SK-N-SH (cell line): ENCODE measurements at regions of chr12 and their contacts with region 1.

Region 1: DNA sequence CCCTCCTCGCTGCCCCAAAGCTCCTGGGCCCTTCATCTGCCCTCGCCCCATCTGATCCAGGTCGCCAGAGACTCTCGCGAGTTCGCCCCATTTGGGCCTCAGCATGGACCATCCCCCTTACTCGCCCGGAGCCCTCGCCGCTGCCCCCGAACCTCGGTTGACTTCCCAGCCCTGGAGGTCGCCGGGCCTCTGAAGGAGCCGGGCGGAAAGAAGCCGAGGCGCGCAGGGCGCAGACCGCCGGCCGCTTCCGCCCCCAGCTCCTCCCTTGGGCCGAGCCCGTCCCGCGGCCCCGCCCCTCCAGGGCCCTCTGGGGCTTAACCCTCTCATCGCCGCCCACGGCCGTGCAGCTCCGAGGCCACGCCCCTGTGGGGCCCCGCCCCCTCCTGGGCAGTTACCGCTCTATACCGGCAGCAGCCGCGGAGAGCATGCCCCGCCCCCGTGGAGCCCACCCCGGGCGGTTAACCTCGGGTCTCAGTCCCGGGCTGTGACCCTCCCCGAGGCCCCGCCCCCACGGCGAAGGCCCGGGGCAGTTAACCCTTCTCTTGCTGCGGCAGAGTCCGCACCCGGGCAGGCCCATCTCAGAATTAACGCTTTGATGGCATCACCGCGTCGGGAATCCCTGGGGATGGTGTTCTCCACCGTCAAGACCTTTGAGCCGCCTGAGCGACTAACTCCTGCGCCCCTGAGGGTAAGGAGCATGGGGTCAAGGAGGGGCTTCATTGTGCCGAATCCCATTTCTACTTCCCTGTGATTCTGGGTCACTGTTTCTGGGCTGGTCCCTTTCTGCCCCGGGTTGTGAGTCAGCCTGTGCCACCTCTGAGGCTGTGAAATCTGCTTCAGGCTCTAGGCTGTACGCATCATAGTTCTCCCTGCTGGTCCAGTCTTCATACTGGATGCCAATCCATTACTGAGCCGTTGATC is at the start of gene SPSB2:
- DNase-seq: peak; percentile 97
- H3K4me3 ChIP-seq: peak within 1 kb of the TSS; percentile 64 to 91
- H3K27ac ChIP-seq: peak within 1 kb of the TSS; percentile 69 to 84
- H3K4me1 ChIP-seq: peaks cover 30 to 39% of the 10 kb centered on the region in 2 experiments
- H3K27me3 ChIP-seq: no peaks in the 10 kb centered on the region
- CTCF ChIP-seq: no peak
- EP300 ChIP-seq: 0 out of 4 replicates have a peak, but pooled peaks of 1 of the 2 experiments have one; percentile 30
- RAD21 ChIP-seq: no peak
- polyA plus RNA-seq, gene SPSB2: 16.9 and 19.6 TPM in 2 replicates

Region 2: DNA sequence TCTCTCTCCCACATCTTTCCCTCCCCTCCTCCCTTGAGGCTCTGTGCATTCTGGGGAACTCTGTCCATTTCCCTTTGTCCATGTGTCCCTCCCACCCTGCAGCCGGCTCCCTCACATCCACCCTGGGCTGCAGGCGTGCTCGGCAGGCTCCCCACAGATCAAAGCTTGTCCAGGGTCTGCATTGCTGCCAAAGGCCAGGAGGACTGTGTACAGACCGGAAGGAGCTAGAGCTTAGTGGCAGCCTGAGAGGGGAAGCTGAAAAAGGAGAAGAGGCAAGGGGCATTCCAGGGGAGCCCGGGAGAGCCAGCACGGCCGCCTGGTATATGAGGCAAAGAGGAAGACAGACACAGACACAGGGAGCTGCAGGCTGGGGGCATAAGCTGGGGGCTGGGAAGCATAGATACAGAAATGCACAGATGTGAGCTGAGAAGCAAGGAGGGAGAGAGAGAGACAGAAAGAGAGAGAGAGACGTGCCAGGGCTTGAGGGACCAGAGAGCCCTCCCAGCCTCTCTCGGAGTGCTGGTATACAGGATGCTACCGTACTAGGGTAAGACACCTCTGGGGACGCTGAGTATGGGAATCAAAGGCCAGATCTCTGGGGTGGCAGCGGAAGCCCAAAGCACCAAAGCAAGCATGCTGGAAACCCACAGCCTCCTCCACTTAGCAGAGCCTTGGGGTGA is 80.7 kb before region 1 on chr12:
- CTCF ChIA-PET with region 1: no interaction called
- POLR2A ChIA-PET with region 1: no interaction called
- DNase-seq: no peak
- H3K4me3 ChIP-seq: no peak overlapping the region
- H3K27ac ChIP-seq: no peak overlapping the region
- H3K4me1 ChIP-seq: peaks cover 0 to 9% of the 10 kb centered on the region in 2 experiments; a peak in 1 of 4 replicates
- H3K27me3 ChIP-seq: no peaks in the 10 kb centered on the region
- CTCF ChIP-seq: no peak
- EP300 ChIP-seq: no peak
- RAD21 ChIP-seq: no peak

Region 3: DNA sequence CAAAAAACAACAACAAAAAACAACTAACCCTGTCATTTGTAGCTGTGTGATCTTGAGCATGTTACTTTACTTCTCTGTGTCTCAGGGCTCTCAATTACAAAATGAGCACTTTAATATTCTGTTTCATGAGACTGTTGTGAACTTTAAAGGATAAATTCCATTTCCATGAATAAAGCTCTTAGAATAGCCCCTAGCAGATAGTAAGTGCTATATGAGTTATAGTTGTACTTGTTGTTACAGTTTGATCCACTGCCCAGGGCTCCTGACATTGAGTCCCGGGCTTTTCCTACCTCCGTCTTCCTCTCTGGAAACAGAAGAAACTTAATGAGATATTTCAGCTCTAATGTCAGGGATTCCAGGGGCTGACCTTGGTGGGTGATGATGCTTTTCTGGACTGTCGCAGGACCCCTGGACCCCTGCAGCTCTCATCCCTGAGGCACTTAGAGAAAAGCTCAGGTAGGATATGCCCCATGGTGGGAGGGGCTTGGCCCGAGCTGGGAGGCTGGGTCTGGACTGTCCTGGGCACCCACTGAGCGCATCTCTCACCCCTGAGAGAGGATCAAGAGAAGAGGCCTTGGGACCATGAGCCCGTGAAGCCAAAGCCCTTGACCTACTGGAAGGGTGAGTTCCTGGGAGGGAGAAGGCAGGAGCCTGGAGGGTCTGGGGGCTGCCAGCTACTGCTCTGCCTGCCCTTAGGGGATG is 40.0 kb before region 1 on chr12:
- CTCF ChIA-PET with region 1: interaction called, 85 read pairs
- POLR2A ChIA-PET with region 1: interaction called, 4 read pairs
- DNase-seq: no peak
- H3K4me3 ChIP-seq: no peak overlapping the region
- H3K27ac ChIP-seq: no peak overlapping the region
- H3K4me1 ChIP-seq: peaks cover 0 to 11% of the 10 kb centered on the region in 2 experiments; a peak in 1 of 4 replicates
- H3K27me3 ChIP-seq: no peaks in the 10 kb centered on the region
- CTCF ChIP-seq: no peak
- EP300 ChIP-seq: no peak
- RAD21 ChIP-seq: no peak

Region 4: DNA sequence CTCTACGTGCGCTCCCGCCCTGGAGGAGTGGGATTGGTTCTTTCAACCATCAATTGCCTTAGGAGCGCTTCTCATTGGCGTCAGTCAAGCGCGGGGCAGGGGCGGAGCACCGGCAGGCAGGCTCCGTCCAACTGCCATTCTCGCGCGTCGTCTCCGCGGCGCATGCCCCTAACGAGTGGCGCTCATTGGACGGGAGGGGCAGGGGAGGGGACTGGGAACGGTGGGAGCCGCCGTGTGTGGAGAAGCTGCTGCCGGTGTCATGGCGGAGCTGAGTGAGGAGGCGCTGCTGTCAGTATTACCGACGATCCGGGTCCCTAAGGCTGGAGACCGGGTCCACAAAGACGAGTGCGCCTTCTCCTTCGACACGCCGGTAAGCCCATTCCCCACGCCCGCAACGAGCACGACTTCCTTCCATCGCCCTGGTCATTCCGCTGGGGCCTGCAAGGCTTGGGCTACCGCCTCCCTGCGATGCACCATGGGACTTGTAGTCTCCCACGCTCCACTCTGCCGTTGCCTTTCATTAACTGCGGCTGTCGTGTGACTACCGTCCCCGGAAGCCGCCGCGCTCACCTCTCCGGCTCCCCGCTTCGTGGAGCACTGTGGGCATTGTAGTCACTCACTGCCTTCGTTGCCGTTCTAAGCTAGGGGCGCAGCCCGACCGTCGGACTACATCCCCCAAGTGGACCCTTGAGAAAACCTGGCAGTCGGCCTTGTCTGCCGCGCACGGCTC is 21.3 kb before region 1 on chr12 and contains the start of gene USP5:
- CTCF ChIA-PET with region 1: interaction called, 164 read pairs
- POLR2A ChIA-PET with region 1: interaction called, 57 read pairs
- DNase-seq: peak; percentile 92
- H3K4me3 ChIP-seq: peak within 1 kb of the TSS; percentile 70 to 76
- H3K27ac ChIP-seq: peak within 1 kb of the TSS; percentile 73 to 97
- H3K4me1 ChIP-seq: peaks cover 7 to 17% of the 10 kb centered on the region in 2 experiments
- H3K27me3 ChIP-seq: no peaks in the 10 kb centered on the region
- CTCF ChIP-seq: 0 out of 2 replicates have a peak, but pooled peaks have one; percentile 7
- EP300 ChIP-seq: no peak
- RAD21 ChIP-seq: no peak
- polyA plus RNA-seq, gene USP5: 97.2 and 100 TPM in 2 replicates

Region 5: GRCh38 chr12:6884539-6884938 is 11.2 kb after region 1 on chr12:
- CTCF ChIA-PET with region 1: interaction called, 56 read pairs
- POLR2A ChIA-PET with region 1: interaction called, 8 read pairs
- DNase-seq: no peak
- H3K4me3 ChIP-seq: no peak overlapping the region
- H3K27ac ChIP-seq: no peak overlapping the region
- H3K4me1 ChIP-seq: no peaks in the 10 kb centered on the region
- H3K27me3 ChIP-seq: no peaks in the 10 kb centered on the region
- CTCF ChIP-seq: no peak
- EP300 ChIP-seq: no peak
- RAD21 ChIP-seq: no peak

Region 6: DNA sequence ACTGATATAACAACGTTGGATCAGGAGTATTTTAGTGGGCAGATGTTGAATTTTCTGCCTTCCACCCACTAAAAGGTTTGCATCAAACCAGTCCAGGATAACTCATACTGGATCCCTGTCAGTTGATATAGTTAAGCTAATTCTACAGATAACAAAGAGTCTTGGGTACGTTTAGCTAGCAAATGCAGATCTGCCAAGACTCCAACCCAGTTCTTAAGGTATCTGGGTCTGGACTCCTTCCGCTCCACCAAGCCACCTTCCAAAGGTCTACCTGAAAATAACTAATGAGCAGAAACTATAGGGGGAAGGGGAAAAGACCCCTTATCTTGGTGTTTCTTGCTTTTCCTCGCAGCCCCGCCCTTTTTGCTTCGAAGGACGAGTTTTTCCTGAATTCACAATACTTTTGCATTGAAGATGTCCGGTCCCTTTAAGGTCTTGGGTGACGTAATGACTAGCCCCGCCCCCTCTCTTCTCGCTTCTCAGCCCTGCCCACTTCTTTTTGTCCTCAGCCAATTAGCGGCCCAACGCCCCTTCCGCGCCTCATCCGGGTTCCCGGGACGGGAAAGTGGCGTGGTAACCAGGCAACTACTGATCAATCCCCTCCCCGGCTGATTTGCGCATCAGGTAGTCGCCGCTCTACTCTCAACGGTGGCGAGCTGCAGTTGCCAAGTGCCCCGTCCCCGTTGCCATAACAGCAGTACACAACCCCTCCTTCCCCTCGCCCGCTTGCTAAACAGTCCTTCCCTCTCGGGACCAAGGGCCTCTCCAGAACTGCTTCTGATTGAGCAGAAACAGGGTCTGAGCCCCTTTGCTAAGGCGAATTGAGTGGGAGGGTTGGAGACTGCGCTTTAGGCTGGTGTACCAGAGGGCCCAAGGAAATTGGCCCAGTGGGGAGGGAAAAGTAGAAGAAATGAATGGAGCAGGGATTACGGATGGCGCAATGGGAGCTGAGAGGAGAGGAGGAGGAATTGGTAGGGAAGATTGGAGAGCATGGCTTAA is 31.2 kb after region 1 on chr12 and contains the start of gene LRRC23:
- CTCF ChIA-PET with region 1: interaction called, 11 read pairs
- POLR2A ChIA-PET with region 1: interaction called, 5 read pairs
- DNase-seq: peak; percentile 88
- H3K4me3 ChIP-seq: peak within 1 kb of the TSS; percentile 72 to 98
- H3K27ac ChIP-seq: peak within 1 kb of the TSS; percentile 71 to 78
- H3K4me1 ChIP-seq: peaks cover 9 to 10% of the 10 kb centered on the region in 2 experiments; a peak in 2 of 4 replicates
- H3K27me3 ChIP-seq: no peaks in the 10 kb centered on the region
- CTCF ChIP-seq: no peak
- EP300 ChIP-seq: no peak
- RAD21 ChIP-seq: no peak
- polyA plus RNA-seq, gene LRRC23: 11.9 TPM in 2 replicates

Region 7: DNA sequence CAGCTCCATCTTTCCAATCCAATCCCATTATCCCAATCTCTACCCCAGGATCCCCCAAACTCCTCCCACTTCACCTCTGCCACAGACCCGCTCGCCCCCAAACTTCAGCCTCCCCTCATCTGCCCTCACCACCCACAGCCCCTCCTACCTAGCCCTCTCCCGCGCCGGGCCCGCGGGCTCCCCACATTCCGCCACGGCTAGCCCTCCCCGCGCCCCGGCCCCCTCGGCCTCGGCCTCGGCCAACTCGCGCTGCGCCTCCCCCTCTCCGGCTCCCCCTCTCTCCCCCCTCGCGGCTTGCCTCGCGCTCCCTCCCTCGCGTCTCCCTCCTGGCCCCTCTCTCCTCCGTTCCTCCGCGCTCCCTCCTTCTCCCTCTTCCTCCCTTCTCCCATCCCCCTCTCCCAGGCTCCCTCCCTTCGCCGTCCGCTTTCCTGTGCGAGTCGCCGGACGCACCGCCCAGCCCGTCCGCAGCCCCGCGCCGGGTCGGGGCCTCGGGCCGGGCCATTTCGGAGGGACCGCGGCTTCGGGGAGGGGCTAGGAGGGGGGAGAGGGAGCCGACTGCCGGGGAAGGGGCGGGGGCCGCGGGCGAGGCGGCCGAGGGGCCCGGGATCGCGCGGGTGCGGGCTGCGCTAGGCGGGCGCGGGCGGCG is 54.1 kb after region 1 on chr12 and contains the start of gene ATN1:
- CTCF ChIA-PET with region 1: interaction called, 27 read pairs
- POLR2A ChIA-PET with region 1: interaction called, 7 read pairs
- DNase-seq: peak; percentile 91
- H3K4me3 ChIP-seq: peak within 1 kb of the TSS; percentile 82 to 87
- H3K27ac ChIP-seq: peak within 1 kb of the TSS; percentile 76 to 90
- H3K4me1 ChIP-seq: peaks cover 37 to 38% of the 10 kb centered on the region in 2 experiments
- H3K27me3 ChIP-seq: no peaks in the 10 kb centered on the region
- CTCF ChIP-seq: no peak
- EP300 ChIP-seq: peak; percentile 16 to 38; a peak in 2 of 4 replicates
- RAD21 ChIP-seq: no peak
- polyA plus RNA-seq, gene ATN1: 18.5 and 29.3 TPM in 2 replicates

Region 8: DNA sequence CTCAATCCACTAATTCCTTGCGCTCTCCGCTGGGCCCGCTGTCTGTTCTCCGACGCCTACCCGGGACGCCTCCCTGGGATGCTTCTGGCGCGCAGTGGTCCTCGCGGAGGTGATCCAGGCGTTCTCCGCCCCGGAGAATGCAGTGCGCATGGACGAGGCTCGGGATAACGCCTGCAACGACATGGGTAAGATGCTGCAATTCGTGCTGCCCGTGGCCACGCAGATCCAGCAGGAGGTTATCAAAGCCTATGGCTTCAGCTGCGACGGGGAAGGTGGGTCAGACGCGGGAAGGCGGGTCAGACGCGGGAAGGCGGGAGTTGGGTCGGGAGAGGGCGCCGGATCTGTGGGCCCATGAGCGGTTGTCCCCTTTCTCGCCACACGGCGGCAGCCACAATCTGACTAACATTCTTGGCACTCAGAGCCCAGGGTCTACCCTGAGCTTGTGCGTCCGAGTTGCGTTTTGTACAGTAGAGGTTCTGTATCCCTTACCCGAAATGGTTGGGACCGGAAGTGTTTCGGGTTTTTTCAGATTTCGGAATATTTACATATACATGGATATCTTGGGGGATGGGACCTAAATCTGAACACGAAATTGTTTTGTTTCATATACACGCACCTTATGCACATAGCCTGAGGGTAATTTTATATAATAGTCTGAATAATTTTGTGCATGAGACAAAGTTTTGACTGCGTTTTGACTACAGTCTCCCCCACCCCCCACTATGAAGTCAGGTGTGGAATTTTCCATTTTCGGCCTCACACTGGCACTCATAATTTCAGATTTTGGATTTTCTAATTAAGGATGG is 71.2 kb after region 1 on chr12:
- CTCF ChIA-PET with region 1: interaction called, 54 read pairs
- POLR2A ChIA-PET with region 1: interaction called, 14 read pairs
- DNase-seq: peak; percentile 93
- H3K4me3 ChIP-seq: peak overlapping the region; percentile 67 to 72
- H3K27ac ChIP-seq: peak overlapping the region; percentile 89 to 98
- H3K4me1 ChIP-seq: peaks cover 6 to 13% of the 10 kb centered on the region in 2 experiments; a peak in 3 of 4 replicates
- H3K27me3 ChIP-seq: no peaks in the 10 kb centered on the region
- CTCF ChIP-seq: peak; percentile 76
- EP300 ChIP-seq: no peak
- RAD21 ChIP-seq: peak; percentile 82